ENCODE measurements at regions of chrX and their contacts with region 1.

Region 1: GRCh38 chrX:20527558-20528011 is 260.9 kb upstream of the RPS6KA3 start:
- DNase-seq: peak in 1 of 10 donors; percentile 33

Region 2: DNA sequence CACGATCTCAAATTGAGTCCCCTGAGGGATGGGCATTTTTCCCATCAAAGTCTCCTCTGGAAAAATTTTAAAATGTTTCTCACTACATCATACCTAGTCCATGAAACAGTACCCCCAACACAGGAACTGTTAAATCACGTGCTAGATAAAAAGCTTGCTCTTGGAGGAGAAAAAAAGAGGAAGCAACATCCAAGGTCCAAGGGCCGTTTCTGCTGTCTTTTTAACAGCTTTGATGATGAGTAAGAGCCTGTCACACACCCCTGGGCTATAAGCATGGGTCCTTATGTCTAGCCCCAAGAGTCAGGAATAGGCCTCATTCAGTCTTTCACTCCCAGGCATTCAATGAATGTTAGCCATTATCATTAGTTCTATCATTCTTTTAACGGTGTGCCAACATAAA is 769.0 kb before region 1 on chrX:
- intact Hi-C with region 1: no loop called
- DNase-seq: no peak

Region 3: DNA sequence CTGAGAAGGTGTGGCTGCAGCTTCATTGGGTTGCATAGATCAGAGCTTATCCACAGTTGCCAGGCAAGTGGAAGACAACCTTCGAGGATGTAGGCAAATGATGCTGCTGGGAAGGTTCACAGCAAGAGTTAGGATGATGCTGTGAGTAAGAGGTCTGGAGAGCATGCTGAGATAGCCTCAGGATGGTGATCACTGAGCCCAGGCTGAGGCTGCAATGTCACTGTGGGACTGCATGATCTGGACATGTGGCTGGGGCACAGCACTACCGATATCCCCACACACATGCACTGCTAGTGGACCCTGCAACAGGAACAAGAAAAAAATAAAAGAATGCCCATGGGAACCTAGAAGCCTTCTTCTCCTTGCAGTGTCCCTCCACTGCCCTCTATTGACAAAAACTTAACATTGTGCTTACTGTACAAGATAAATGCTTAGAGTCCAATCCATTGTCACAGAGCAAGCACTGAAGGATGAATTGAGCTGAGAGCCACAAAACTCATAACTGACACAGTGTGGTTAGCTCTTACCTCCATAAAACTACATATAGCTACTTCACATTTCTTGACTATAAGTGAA is 952.2 kb after region 1 on chrX:
- intact Hi-C with region 1: loop called (anchors 2 kb)
- DNase-seq: peak in 1 of 10 donors; percentile 21

Region 4: DNA sequence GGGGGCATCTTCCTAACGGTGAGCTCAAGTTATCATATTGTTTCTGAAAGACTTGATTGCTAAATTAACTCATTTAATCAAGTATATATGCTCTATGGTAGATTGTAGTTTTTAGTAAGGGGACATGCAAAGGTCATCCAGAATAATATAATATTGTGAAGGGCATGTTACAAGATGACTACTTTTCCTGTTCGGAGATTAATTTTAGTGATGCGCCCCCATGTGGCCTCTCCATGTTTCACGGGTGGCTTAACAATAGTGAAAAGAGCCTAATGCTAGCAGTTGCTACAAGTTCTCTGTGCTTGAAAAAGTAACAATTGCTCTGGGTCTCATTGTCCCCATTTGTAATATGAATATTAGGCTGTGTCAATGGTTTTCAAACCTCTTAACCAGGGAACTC is 1218.2 kb after region 1 on chrX:
- intact Hi-C with region 1: loop called (anchors 10 kb)
- DNase-seq: peak in 7 of 10 donors; percentile 12 to 86 (median 40)

Region 5: DNA sequence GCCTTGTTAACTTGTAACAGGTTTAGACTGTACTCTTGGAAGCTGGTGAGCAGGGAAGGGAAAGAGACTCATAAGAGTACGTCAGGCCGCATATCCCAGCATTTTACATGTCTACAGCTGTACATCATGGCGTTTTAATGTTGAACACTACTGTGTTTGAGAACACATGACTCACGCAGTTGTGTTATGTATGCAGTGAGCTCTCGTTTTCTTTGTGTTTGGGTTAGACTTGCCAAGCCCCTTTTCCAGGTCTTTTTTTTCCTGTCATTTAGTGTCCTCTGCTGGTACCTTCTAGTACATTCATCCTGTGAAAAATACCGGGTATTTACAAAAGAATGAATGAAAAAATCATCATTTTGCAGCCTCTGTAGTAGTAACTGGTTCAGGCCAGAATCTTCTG is 1448.2 kb after region 1 on chrX:
- intact Hi-C with region 1: loop called (anchors 5 kb)
- DNase-seq: no peak

Region 6: DNA sequence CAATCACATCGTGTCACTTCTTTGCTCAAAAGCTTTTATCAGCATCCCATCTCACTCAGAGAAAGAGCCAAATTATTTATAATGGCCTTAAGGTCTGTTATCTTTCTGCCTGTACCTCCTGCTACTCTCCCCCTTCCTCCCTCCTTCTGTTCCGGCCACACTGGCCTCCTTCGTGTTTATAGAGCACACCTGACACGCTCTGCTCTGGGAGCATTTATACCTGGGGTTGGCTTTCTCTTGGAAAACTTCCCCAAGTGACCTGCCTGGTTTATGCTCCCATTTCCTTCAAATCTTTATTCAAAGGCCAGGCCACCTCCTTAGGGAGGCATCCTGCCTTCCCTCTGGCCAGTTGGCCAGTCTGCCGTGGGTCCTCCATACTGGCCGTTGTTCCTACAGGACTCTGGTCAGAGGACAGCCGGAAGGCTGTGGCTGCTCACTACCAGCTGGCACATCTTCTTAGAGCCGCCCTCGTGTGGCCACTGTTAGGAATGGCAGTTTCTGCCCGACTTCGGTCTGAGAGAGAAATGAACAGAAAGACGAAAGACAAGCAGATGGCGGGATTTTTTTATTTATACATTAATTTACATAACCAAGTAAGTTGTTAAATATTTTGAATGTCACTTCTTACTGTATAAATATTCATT is 1665.0 kb after region 1 on chrX:
- intact Hi-C with region 1: loop called (anchors 10 kb)
- DNase-seq: peak; percentile 19 to 95 (median 58)